CD8-positive, alpha-beta memory T cell (primary cell): ENCODE measurements at regions of chr1 and their contacts with region 1.

Region 1: DNA sequence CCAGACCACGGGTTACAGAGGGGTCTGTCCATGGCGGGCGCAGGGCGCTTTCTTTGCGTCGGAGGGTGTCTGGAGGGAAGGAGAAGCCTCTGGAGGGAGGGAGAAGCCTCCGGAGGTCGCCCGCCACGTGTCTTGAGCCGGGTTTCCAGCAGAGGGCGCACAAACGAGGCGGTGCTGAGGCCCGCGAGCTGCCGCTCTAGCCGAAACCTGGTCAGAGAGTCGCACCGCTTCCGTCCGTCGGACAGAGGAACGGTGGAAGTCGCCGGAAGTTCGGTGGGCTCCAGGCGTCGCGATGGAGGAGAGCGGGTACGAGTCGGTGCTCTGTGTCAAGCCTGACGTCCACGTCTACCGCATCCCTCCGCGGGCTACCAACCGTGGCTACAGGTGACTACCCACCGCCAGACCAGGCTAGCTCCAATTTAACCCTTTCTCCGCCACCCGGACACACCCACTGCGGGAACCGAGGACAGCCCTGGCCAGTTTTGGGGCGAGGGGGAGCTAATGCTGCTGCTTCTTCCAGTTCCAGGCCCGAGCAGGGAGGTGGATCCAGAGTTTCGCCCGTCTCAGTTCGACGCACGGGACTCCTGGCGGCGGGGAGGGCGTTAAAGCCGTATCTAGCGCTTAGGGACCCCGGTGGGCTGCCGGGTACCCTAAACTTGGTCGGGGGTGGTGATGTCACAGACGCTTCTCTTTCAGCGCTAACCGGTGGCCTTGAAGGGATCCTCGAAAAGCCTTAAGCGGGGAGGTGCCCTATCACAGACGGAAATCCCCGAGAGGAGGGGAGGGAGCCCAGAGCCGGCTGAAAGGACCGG is at the start of gene NECAP2:
- DNase-seq: peak; percentile 86 to 93 (median 88)
- H3K4me3 ChIP-seq: peak within 1 kb of the TSS; percentile 87
- H3K4me3 Mint-ChIP-seq: peak within 1 kb of the TSS; percentile 93 to 98 (median 95)
- H3K27ac ChIP-seq: peak within 1 kb of the TSS; percentile 98
- H3K27ac Mint-ChIP-seq: peak within 1 kb of the TSS; percentile 90 to 99 (median 96)
- H3K4me1 ChIP-seq: peaks cover 36% of the 10 kb centered on the region
- H3K4me1 Mint-ChIP-seq: peaks cover 33 to 48% (median 35%) of the 10 kb centered on the region in 3 donors
- H3K27me3 ChIP-seq: no peaks in the 10 kb centered on the region
- H3K27me3 Mint-ChIP-seq: no peaks in the 10 kb centered on the region
- total RNA-seq, gene NECAP2: 79.4 to 80.5 TPM

Region 2: GRCh38 chr1:16366722-16367257 is 73.9 kb before region 1 on chr1 and contains the start of gene SZRD1:
- CTCF ChIA-PET with region 1: interaction called, 7 read pairs
- POLR2A ChIA-PET with region 1: interaction called, 10 read pairs
- DNase-seq: peak; percentile 94 to 98 (median 95)
- H3K4me3 ChIP-seq: peak within 1 kb of the TSS; percentile 98
- H3K4me3 Mint-ChIP-seq: peak within 1 kb of the TSS; percentile 86 to 99 (median 98)
- H3K27ac ChIP-seq: peak within 1 kb of the TSS; percentile 99
- H3K27ac Mint-ChIP-seq: peak within 1 kb of the TSS; percentile 99 to 100 (median 99)
- H3K4me1 ChIP-seq: peaks cover 35% of the 10 kb centered on the region
- H3K4me1 Mint-ChIP-seq: peaks cover 32 to 42% (median 42%) of the 10 kb centered on the region in 3 donors
- H3K27me3 ChIP-seq: no peaks in the 10 kb centered on the region
- H3K27me3 Mint-ChIP-seq: no peaks in the 10 kb centered on the region
- total RNA-seq, gene SZRD1: 208 to 216 TPM

Region 3: GRCh38 chr1:16420424-16421118 is 20.1 kb before region 1 on chr1:
- CTCF ChIA-PET with region 1: interaction called, 16 read pairs
- POLR2A ChIA-PET with region 1: interaction called, 8 read pairs
- DNase-seq: peak; percentile 24 to 69 (median 50)
- H3K4me3 ChIP-seq: peak overlapping the region; percentile 13
- H3K4me3 Mint-ChIP-seq: peak overlapping the region; percentile 0 to 81 (median 73)
- H3K27ac ChIP-seq: peak overlapping the region; percentile 32
- H3K27ac Mint-ChIP-seq: peak overlapping the region; percentile 40 to 96 (median 92)
- H3K4me1 ChIP-seq: peaks cover 26% of the 10 kb centered on the region
- H3K4me1 Mint-ChIP-seq: peaks cover 28 to 34% (median 28%) of the 10 kb centered on the region in 3 donors
- H3K27me3 ChIP-seq: no peaks in the 10 kb centered on the region
- H3K27me3 Mint-ChIP-seq: no peaks in the 10 kb centered on the region